ENCODE measurements at regions of chr4 and their contacts with region 1.

Region 1: DNA sequence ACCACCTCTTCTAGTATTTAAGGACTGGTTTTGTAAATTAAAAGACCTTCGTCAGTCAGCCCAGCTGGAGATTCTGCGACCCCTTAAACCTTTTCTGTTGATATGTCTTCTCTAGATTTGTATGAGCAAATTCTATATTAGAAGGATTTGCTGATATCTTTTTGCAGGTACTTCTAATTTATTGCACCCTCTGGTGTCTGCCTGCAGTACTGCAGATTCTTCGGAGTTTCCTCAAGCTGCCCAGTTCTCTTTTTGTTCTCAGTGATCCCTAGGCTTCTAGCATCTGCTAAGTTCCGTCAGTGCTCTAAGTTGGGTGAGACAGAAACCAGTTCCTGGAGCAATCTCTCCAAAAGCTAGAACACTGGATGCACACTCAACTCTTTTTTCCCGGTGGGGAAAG is 545.2 kb downstream of the C4orf33 start:
- DNase-seq: peak; percentile 63
- H3K4me3 Mint-ChIP-seq: no peak overlapping the region
- H3K27ac Mint-ChIP-seq: no peak overlapping the region
- H3K4me1 Mint-ChIP-seq: no peaks in the 10 kb centered on the region
- H3K27me3 Mint-ChIP-seq: no peaks in the 10 kb centered on the region
- CTCF ChIP-seq: peak; percentile 43

Region 2: DNA sequence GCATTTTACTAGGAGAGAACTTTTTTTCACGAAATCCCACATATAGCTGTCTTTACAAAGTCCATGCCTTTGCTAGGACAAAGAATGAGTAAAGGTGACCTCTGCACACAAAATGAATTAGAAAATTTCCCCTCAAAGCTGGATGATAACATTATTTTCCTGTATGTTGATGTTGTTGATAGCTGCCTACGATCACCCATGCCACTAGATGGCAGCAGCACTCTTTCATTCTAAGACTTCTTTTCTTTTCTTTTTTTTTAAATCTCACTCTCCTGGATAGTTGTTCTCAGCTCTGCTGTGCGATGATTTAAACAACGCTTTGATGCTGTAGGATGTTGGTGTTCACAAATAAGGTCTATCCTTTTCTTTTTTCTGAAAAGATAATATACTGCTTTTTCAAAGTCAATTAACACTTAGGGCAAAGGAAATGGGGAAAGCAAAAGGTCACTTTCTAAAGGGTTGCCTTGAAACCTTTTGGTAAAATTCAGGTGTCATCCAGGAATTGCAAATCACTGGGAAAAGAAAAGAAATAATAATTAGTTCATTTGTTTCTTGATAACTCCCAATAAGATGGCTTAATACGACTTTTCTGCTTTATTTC is 278.4 kb before region 1 on chr4:
- CTCF ChIA-PET with region 1: interaction called, 110 read pairs
- POLR2A ChIA-PET with region 1: interaction called, 3 read pairs
- intact Hi-C with region 1: loop called (anchors 1 kb)
- DNase-seq: peak; percentile 87
- H3K4me3 Mint-ChIP-seq: no peak overlapping the region
- H3K27ac Mint-ChIP-seq: no peak overlapping the region
- H3K4me1 Mint-ChIP-seq: peaks cover 12% of the 10 kb centered on the region
- H3K27me3 Mint-ChIP-seq: no peaks in the 10 kb centered on the region
- CTCF ChIP-seq: peak; percentile 78

Region 3: GRCh38 chr4:129526814-129527213 is 114.4 kb before region 1 on chr4:
- CTCF ChIA-PET with region 1: interaction called, 133 read pairs
- POLR2A ChIA-PET with region 1: interaction called, 6 read pairs
- intact Hi-C with region 1: loop called (anchors 1 kb)
- DNase-seq: peak; percentile 54
- H3K4me3 Mint-ChIP-seq: no peak overlapping the region
- H3K27ac Mint-ChIP-seq: no peak overlapping the region
- H3K4me1 Mint-ChIP-seq: no peaks in the 10 kb centered on the region
- H3K27me3 Mint-ChIP-seq: no peaks in the 10 kb centered on the region
- CTCF ChIP-seq: peak; percentile 55

Region 4: GRCh38 chr4:129565214-129565613 is 76.0 kb before region 1 on chr4:
- CTCF ChIA-PET with region 1: interaction called, 10 read pairs
- POLR2A ChIA-PET with region 1: no interaction called
- intact Hi-C with region 1: no loop called
- DNase-seq: no peak
- H3K4me3 Mint-ChIP-seq: no peak overlapping the region
- H3K27ac Mint-ChIP-seq: no peak overlapping the region
- H3K4me1 Mint-ChIP-seq: peaks cover 6% of the 10 kb centered on the region
- H3K27me3 Mint-ChIP-seq: no peaks in the 10 kb centered on the region
- CTCF ChIP-seq: no peak

Region 5: GRCh38 chr4:129668092-129668491 is 26.9 kb after region 1 on chr4:
- CTCF ChIA-PET with region 1: interaction called, 11 read pairs
- POLR2A ChIA-PET with region 1: no interaction called
- intact Hi-C with region 1: no loop called
- DNase-seq: no peak
- H3K4me3 Mint-ChIP-seq: no peak overlapping the region
- H3K27ac Mint-ChIP-seq: no peak overlapping the region
- H3K4me1 Mint-ChIP-seq: no peaks in the 10 kb centered on the region
- H3K27me3 Mint-ChIP-seq: no peaks in the 10 kb centered on the region
- CTCF ChIP-seq: no peak

Region 6: GRCh38 chr4:130257271-130257670 is 616.1 kb after region 1 on chr4:
- CTCF ChIA-PET with region 1: no interaction called
- POLR2A ChIA-PET with region 1: no interaction called
- intact Hi-C with region 1: no loop called
- DNase-seq: peak; percentile 82
- H3K4me3 Mint-ChIP-seq: no peak overlapping the region
- H3K27ac Mint-ChIP-seq: peak overlapping the region; percentile 35
- H3K4me1 Mint-ChIP-seq: no peaks in the 10 kb centered on the region
- H3K27me3 Mint-ChIP-seq: no peaks in the 10 kb centered on the region
- CTCF ChIP-seq: no peak

Measured in MCF 10A (cell line).